ENCODE measurements at regions of chr4 and their contacts with region 1.

Region 1: DNA sequence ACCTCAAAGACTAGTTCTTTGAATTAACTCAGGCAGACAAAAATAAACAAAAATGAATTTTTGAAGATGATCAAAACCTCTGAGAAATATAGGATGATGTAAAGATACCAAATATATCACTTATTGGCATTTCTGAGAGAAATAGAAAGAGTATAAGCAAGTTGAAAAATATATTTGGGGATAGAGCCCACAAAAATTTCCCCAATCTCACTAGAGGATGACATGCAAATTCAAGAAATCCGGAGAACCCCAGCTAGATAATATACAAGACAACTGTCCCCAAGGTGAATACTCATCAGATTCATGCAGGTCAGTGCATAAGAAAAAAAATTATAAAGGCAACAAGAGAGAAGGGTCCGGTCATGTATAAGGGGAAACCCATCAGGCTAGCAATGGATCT is 129.1 kb downstream of the CXXC4 start:
- DNase-seq: no peak
- H3K4me3 ChIP-seq: no peak overlapping the region
- H3K27ac ChIP-seq: no peak overlapping the region
- H3K4me1 ChIP-seq: no peaks in the 10 kb centered on the region
- H3K27me3 ChIP-seq: no peaks in the 10 kb centered on the region
- CTCF ChIP-seq: no peak

Region 2: DNA sequence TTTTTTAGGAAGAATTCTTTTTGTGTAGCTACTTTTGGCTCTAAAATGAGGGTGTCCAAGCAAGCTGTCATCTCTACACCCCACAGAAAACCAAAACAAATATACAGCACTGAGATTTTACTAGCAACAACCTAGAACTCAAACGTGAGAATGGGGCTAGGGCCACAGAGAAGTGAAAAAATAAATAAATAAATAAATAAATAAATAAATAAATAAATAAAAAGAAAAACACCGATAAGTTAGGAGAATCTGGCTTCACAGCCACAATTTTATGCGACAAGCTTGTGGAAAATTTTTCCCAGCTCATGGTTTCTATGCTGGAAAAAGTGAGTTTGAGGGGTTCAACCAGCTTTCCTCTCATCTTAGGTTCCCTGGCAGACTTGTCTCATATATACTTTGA is 321.2 kb before region 1 on chr4:
- CTCF ChIA-PET with region 1: no interaction called
- POLR2A ChIA-PET with region 1: no interaction called
- intact Hi-C with region 1: no loop called
- DNase-seq: no peak
- H3K4me3 ChIP-seq: no peak overlapping the region
- H3K27ac ChIP-seq: no peak overlapping the region
- H3K4me1 ChIP-seq: no peaks in the 10 kb centered on the region
- H3K27me3 ChIP-seq: no peaks in the 10 kb centered on the region
- CTCF ChIP-seq: no peak

Region 3: DNA sequence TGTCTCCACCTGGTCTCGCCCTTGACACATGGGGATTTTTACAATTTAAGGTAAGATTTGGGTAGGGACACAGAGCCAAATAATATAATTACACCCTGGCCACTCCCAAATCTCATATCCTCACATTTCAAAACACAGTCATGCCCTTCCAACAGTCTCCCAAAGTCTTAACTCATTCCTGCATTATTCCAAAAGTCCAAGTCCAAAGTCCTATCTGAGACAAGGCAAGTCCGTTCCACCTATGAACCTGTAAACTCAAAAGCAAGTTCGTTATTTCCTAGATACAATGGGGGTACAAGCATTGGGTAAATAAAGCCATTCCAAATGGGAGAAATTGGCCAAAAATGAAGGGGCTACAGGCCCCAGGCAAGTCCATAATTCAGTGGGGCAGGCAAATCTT is 251.8 kb before region 1 on chr4:
- CTCF ChIA-PET with region 1: no interaction called
- POLR2A ChIA-PET with region 1: no interaction called
- intact Hi-C with region 1: loop called (anchors 5 kb)
- DNase-seq: no peak
- H3K4me3 ChIP-seq: no peak overlapping the region
- H3K27ac ChIP-seq: no peak overlapping the region
- H3K4me1 ChIP-seq: no peaks in the 10 kb centered on the region
- H3K27me3 ChIP-seq: no peaks in the 10 kb centered on the region
- CTCF ChIP-seq: no peak

Measured in A673 (cell line).